K562 (cell line): ENCODE measurements at regions of chr4 and their contacts with region 1.

Region 1: GRCh38 chr4:76377911-76378310 is 43.0 kb downstream of the CCDC158 start:
- DNase-seq: peak; percentile 31 to 69 (median 49)
- ATAC-seq: peak; percentile 83
- H3K4me3 ChIP-seq: no peak overlapping the region
- H3K27ac ChIP-seq: no peak overlapping the region
- H3K4me1 ChIP-seq: peaks cover 0 to 7% of the 10 kb centered on the region in 2 experiments; a peak in 1 of 5 replicates
- H3K27me3 ChIP-seq: no peaks in the 10 kb centered on the region
- CTCF ChIP-seq: peak; percentile 75 to 79 (median 77)
- EP300 ChIP-seq: no peak
- POLR2A ChIP-seq: no peak
- RAD21 ChIP-seq: peak; percentile 54 to 83

Region 2: GRCh38 chr4:76251441-76252270 is 126.3 kb before region 1 on chr4 and contains the start of gene FAM47E:
- CTCF ChIA-PET with region 1: no interaction called
- POLR2A ChIA-PET with region 1: no interaction called
- in situ Hi-C with region 1: no loop called
- intact Hi-C with region 1: loop called (anchors 10 kb)
- DNase-seq: peak; percentile 25 to 39 (median 31)
- ATAC-seq: peak; percentile 76
- H3K4me3 ChIP-seq: peak within 1 kb of the TSS; percentile 14; the same call in 1 of the 2 replicates
- H3K27ac ChIP-seq: no peak within 1 kb of the TSS
- H3K4me1 ChIP-seq: peaks cover 8 to 15% of the 10 kb centered on the region in 2 experiments; a peak in 4 of 5 replicates
- H3K27me3 ChIP-seq: no peaks in the 10 kb centered on the region
- CTCF ChIP-seq: peak in 2 of 3 experiments; percentile 29 to 31; a peak in 4 of 6 replicates
- EP300 ChIP-seq: no peak
- POLR2A ChIP-seq: no peak
- RAD21 ChIP-seq: no peak
- polyA plus RNA-seq, gene FAM47E: 11.8 to 12.4 TPM

Region 3: GRCh38 chr4:76301068-76301774 is 76.7 kb before region 1 on chr4:
- CTCF ChIA-PET with region 1: no interaction called
- POLR2A ChIA-PET with region 1: no interaction called
- in situ Hi-C with region 1: no loop called
- intact Hi-C with region 1: loop called (anchors 5 kb)
- DNase-seq: peak; percentile 72 to 94 (median 82)
- ATAC-seq: peak; percentile 96
- H3K4me3 ChIP-seq: no peak overlapping the region
- H3K27ac ChIP-seq: peak overlapping the region; percentile 86
- H3K4me1 ChIP-seq: peaks cover 7 to 39% of the 10 kb centered on the region in 2 experiments
- H3K27me3 ChIP-seq: no peaks in the 10 kb centered on the region
- CTCF ChIP-seq: no peak
- EP300 ChIP-seq: peak; percentile 91
- POLR2A ChIP-seq: no peak
- RAD21 ChIP-seq: no peak